BJ (cell line): ENCODE measurements at regions of chr12 and their contacts with region 1.

Region 1: GRCh38 chr12:122021822-122022526 is at the start of gene BCL7A:
- DNase-seq: no peak
- H3K4me3 ChIP-seq: peak within 1 kb of the TSS; percentile 55
- H3K27me3 ChIP-seq: no peaks in the 10 kb centered on the region
- CTCF ChIP-seq: no peak
- polyA plus RNA-seq, gene BCL7A: 2.7 and 3.4 TPM in 2 replicates

Region 2: GRCh38 chr12:122078141-122079032 is 56.4 kb after region 1 on chr12 and contains the start of gene MLXIP:
- CTCF ChIA-PET with region 1: no interaction called
- POLR2A ChIA-PET with region 1: interaction called, 12 read pairs
- DNase-seq: no peak
- H3K4me3 ChIP-seq: peak within 1 kb of the TSS; percentile 69
- H3K27me3 ChIP-seq: no peaks in the 10 kb centered on the region
- CTCF ChIP-seq: no peak
- polyA plus RNA-seq, gene MLXIP: 3.3 and 4.8 TPM in 2 replicates